ENCODE measurements at regions of chr11 and their contacts with region 1.

Region 1: DNA sequence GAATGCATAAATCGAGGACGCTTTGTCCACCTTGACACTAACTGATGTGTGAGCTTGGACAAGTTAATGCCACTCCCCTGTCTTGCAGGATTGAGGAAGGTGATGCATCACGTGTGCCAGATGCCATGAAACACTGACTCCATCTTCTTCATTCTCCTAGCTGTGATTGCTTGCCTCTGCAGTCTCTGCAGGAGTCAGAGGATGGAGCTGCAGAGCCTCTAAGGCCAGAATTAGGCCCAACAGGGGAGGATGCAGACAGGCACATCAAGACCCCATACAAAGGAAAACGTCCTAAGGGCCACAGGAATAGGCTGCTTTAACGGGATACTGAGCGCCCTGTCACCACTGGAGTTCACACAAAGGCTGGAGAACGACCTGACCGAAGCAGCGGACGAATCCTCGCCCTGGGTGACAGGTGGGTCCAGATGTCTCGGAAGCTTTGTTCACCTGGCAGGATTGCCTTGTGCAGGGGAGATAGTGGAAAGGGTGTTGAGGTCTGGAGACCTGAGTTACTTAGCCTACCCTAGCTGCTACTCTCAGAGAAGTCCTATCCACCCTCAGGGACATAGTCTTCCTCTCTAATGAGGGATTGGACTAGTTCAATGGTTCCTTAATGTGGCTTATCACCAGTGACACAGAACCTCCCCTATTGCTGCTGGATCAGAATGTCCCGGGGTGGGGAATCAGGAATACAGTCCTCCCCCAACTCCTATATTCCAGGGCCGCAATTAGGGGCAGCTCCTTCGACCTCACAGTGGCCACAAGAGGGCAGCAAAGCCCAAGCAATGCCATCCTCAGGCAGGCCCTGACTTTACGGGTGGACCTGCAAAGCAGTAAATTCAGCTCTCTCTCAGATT is 32.4 kb downstream of the DBX1 start:
- DNase-seq: peak; percentile 56
- H3K4me3 Mint-ChIP-seq: no peak overlapping the region
- H3K27ac Mint-ChIP-seq: no peak overlapping the region
- H3K4me1 Mint-ChIP-seq: peaks cover 9% of the 10 kb centered on the region
- H3K27me3 Mint-ChIP-seq: peaks cover 18% of the 10 kb centered on the region

Region 2: DNA sequence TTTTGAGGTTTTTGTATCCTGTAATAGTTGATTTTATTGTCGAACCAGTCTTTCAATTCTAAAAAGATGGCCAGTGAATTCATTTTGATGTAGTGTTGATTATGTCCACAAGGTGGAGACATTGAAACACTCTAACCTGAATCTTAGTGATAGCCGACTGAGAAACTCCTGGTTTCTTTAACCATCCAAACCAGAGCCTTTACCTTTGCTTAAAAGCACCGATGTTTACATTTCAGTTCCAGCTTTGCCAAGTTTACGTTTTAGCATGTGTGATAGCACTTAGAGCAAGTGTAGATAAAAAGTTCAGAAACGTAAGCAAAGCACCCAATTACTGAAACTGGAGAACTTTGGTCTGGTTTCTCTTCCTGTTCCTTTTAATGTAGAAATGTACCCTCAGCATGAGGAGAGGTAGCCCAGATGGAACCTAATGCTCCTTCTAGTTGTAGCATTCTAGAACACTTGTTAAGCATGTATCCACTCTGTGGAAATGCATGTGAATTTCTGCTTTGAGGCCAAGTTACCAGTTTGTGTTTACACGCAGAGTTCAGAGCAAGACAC is 176.3 kb before region 1 on chr11:
- intact Hi-C with region 1: loop called (anchors 1 kb)
- DNase-seq: no peak
- H3K4me3 Mint-ChIP-seq: peak overlapping the region; percentile 24
- H3K27ac Mint-ChIP-seq: no peak overlapping the region
- H3K4me1 Mint-ChIP-seq: peaks cover 7% of the 10 kb centered on the region
- H3K27me3 Mint-ChIP-seq: peaks cover 17% of the 10 kb centered on the region

Region 3: DNA sequence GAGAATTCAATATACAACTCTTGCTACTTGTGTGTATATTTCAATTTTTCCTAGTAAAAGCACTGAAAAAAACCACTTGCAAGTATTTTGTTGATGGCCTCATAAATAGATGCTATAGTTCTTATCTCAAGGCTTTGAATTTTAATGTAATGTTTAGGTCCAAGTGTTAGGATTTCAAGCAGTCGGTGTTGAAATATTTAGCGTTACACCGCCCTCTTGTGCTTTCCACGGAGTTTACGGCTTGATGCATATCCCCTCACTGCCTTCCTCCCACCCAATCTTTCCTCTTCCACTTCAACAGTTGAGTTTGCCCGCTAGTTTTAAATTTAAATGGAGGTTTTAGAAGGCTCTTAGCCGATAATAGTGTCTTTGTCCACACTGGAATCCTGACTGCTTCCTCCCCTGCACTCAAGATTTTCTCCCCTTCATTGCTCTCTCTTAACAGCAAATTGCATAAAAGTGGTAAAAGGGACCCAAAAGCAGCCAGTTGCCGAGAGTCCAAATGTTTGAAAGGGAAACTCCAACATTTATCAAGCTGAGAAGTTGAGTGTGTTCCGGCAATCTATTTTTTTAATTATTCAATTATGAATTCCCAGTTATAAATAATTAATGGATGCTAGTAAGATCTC is 209.7 kb after region 1 on chr11:
- intact Hi-C with region 1: loop called (anchors 5 kb)
- DNase-seq: no peak
- H3K4me3 Mint-ChIP-seq: no peak overlapping the region
- H3K27ac Mint-ChIP-seq: no peak overlapping the region
- H3K4me1 Mint-ChIP-seq: peaks cover 3% of the 10 kb centered on the region
- H3K27me3 Mint-ChIP-seq: peaks cover 64% of the 10 kb centered on the region

Region 4: GRCh38 chr11:20355221-20356219 is 227.6 kb after region 1 on chr11:
- intact Hi-C with region 1: loop called (anchors 1 kb)
- DNase-seq: no peak
- H3K4me3 Mint-ChIP-seq: no peak overlapping the region
- H3K27ac Mint-ChIP-seq: no peak overlapping the region
- H3K4me1 Mint-ChIP-seq: peaks cover 16% of the 10 kb centered on the region
- H3K27me3 Mint-ChIP-seq: peaks cover 10% of the 10 kb centered on the region